ENCODE measurements at regions of chr6 and their contacts with region 1.

Region 1: GRCh38 chr6:46993846-46994245 is 48.3 kb downstream of the ADGRF1 start:
- DNase-seq: no peak
- H3K4me3 ChIP-seq: no peak overlapping the region
- H3K27ac ChIP-seq: no peak overlapping the region
- H3K4me1 ChIP-seq: peaks cover 7% of the 10 kb centered on the region
- H3K27me3 ChIP-seq: no peaks in the 10 kb centered on the region
- CTCF ChIP-seq: no peak
- POLR2A ChIP-seq: no peak

Region 2: GRCh38 chr6:46848684-46849360 is 145.0 kb before region 1 on chr6:
- intact Hi-C with region 1: loop called (anchors 5 kb)
- DNase-seq: no peak
- H3K4me3 ChIP-seq: no peak overlapping the region
- H3K27ac ChIP-seq: no peak overlapping the region
- H3K4me1 ChIP-seq: no peaks in the 10 kb centered on the region
- H3K27me3 ChIP-seq: no peaks in the 10 kb centered on the region
- CTCF ChIP-seq: peak; percentile 72 to 86 (median 86)
- POLR2A ChIP-seq: no peak

Measured in vagina (tissue), 2 donors.